Posterior vena cava (tissue), 2 donors: ENCODE measurements at regions of chr17 and their contacts with region 1.

Region 1: GRCh38 chr17:7862692-7863437 is 5.1 kb downstream of the CYB5D1 start:
- DNase-seq: no peak

Region 2: DNA sequence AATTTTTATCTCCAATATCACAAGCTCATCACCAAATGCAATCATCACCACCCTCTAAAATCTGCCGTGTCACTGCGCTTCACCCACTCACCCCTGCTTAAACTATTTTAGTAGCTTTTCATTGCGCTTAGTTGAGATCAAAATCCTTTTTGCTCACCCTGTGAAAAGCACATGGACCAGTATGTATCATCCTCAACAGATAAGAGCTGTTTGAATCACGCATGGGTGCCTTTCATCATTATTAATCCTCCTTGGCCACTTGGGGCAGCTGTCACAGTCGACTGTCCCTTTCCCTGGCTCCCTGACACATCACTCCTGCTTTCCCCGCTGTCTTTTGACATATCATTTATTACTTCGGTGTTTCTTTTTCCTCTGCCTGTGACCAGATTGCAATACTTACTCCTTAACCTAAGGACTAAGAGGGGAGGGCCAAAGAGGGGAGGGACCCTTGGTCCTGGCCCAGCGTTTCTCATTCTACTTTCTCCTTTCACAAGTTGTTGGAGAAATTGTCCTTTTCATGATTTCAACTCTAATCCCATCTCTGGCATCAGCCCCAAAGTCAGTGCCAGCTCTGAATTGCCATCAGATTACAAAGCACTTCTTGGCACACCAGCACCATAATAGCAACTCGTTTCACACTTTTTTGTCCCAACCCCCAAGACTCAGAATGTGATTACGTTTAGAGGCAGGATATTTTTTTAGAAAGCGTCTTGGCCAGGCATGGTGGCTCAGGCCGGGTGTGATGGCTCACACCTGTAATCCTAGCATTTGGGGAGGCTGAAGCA is 37.5 kb before region 1 on chr17:
- intact Hi-C with region 1: loop called in 1 of 2 experiments (anchors 5 kb)
- DNase-seq: no peak